Esophagus muscularis mucosa (tissue), 4 donors: ENCODE measurements at regions of chr22 and their contacts with region 1.

Region 1: GRCh38 chr22:45502215-45503049 is at the start of gene FBLN1:
- DNase-seq: no peak
- H3K4me3 ChIP-seq: peak within 1 kb of the TSS; percentile 60 to 72 (median 63)
- H3K27ac ChIP-seq: peak within 1 kb of the TSS; percentile 76 to 82 (median 80)
- H3K4me1 ChIP-seq: peaks cover 7 to 84% (median 67%) of the 10 kb centered on the region in 4 donors
- H3K27me3 ChIP-seq: peaks cover 0 to 29% (median 7%) of the 10 kb centered on the region in 4 donors
- CTCF ChIP-seq: peak in 1 of 3 experiments; percentile 3
- EP300 ChIP-seq: no peak
- POLR2A ChIP-seq: no peak
- total RNA-seq, gene FBLN1: 355 to 534 (median 417) TPM

Region 2: DNA sequence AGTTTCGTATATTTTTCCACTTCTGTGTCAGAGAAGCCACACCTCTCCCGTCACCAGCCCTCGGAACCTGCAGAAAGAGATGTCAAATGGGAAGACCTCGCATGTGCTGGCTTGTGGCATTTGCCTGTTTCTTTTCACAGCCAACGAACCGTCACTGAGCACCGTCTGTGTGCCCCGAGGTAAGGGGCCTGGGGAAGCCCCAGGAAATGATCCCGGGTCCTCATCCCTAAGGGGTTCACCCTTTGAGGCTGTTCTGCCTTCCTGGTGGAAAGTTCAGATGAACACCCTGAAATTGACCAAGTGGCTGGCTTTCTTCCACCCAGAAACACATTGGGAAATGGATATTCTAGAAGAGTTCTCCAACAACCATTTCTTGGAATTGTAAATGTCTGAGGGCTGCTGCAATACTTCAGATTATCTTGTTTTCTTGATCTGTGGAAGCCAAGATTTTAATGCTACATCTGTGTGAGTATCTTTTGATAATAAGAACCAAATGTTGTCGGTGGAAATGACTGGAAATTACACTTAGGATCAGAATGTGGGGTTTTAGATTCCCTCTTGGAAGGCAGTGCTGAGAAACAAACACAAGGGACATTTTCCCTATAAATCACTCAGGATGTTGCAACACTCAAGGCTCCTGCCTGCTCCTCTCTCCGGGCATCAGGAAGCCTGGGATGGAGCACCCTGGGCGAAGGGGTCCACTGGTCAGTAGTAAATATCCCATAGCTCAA is 51.3 kb before region 1 on chr22:
- intact Hi-C with region 1: loop called (anchors 5 kb)
- DNase-seq: no peak
- H3K4me3 ChIP-seq: no peak overlapping the region
- H3K27ac ChIP-seq: peak overlapping the region; percentile 58 to 80 (median 67)
- H3K4me1 ChIP-seq: peaks cover 0 to 56% (median 33%) of the 10 kb centered on the region in 4 donors
- H3K27me3 ChIP-seq: peaks cover 0 to 8% (median 0%) of the 10 kb centered on the region in 4 donors
- CTCF ChIP-seq: no peak
- EP300 ChIP-seq: no peak
- POLR2A ChIP-seq: no peak

Region 3: GRCh38 chr22:45775569-45776312 is 273.3 kb after region 1 on chr22:
- intact Hi-C with region 1: no loop called
- DNase-seq: no peak
- H3K4me3 ChIP-seq: no peak overlapping the region
- H3K27ac ChIP-seq: no peak overlapping the region
- H3K4me1 ChIP-seq: peaks cover 0 to 8% (median 3%) of the 10 kb centered on the region in 4 donors
- H3K27me3 ChIP-seq: no peaks in the 10 kb centered on the region
- CTCF ChIP-seq: no peak
- EP300 ChIP-seq: no peak
- POLR2A ChIP-seq: no peak